MCF 10A (cell line): ENCODE measurements at regions of chr20 and their contacts with region 1.

Region 1: GRCh38 chr20:14878768-14879697 is 541.6 kb upstream of the FLRT3 start:
- DNase-seq: peak; percentile 74
- H3K4me3 Mint-ChIP-seq: no peak overlapping the region
- H3K27ac Mint-ChIP-seq: peak overlapping the region; percentile 1
- H3K4me1 Mint-ChIP-seq: peaks cover 17% of the 10 kb centered on the region
- H3K27me3 Mint-ChIP-seq: no peaks in the 10 kb centered on the region
- CTCF ChIP-seq: no peak

Region 2: DNA sequence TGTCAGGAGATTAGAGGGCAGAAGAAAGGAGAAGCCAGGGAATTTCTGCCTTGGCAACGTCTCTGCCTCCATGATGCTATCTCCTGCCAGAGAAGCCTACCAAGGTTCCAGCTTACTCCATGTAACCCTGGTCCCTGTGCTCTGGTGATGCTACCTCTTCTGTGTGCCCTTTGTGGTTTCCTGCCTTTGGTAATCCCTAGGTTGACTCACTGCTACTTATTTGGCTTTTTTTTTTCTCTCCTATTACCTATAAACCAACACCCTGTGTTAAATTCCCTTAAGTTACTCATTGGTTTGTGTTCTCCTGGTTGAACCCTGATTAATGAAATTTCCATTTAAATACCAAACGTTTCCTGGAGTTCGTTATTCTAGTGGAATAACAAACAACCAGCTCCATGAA is 13.9 kb before region 1 on chr20:
- CTCF ChIA-PET with region 1: interaction called, 3 read pairs
- POLR2A ChIA-PET with region 1: interaction called, 16 read pairs
- intact Hi-C with region 1: no loop called
- DNase-seq: peak; percentile 72
- H3K4me3 Mint-ChIP-seq: no peak overlapping the region
- H3K27ac Mint-ChIP-seq: peak overlapping the region; percentile 42
- H3K4me1 Mint-ChIP-seq: peaks cover 13% of the 10 kb centered on the region
- H3K27me3 Mint-ChIP-seq: no peaks in the 10 kb centered on the region
- CTCF ChIP-seq: no peak

Region 3: GRCh38 chr20:14948423-14948822 is 69.4 kb after region 1 on chr20:
- CTCF ChIA-PET with region 1: no interaction called
- POLR2A ChIA-PET with region 1: interaction called, 11 read pairs
- intact Hi-C with region 1: no loop called
- DNase-seq: peak; percentile 14
- H3K4me3 Mint-ChIP-seq: no peak overlapping the region
- H3K27ac Mint-ChIP-seq: no peak overlapping the region
- H3K4me1 Mint-ChIP-seq: peaks cover 14% of the 10 kb centered on the region
- H3K27me3 Mint-ChIP-seq: no peaks in the 10 kb centered on the region
- CTCF ChIP-seq: peak; percentile 24

Region 4: GRCh38 chr20:14997635-14998185 is 118.7 kb after region 1 on chr20:
- CTCF ChIA-PET with region 1: no interaction called
- POLR2A ChIA-PET with region 1: no interaction called
- intact Hi-C with region 1: loop called (anchors 10 kb)
- DNase-seq: peak; percentile 90
- H3K4me3 Mint-ChIP-seq: no peak overlapping the region
- H3K27ac Mint-ChIP-seq: peak overlapping the region; percentile 54
- H3K4me1 Mint-ChIP-seq: peaks cover 21% of the 10 kb centered on the region
- H3K27me3 Mint-ChIP-seq: no peaks in the 10 kb centered on the region
- CTCF ChIP-seq: no peak